Endothelial cell of umbilical vein (primary cell): ENCODE measurements at regions of chr12 and their contacts with region 1.

Region 1: GRCh38 chr12:99598785-99599184 is 48.8 kb upstream of the GARIN6 start:
- DNase-seq: no peak
- H3K4me3 ChIP-seq: no peak overlapping the region
- H3K27ac ChIP-seq: no peak overlapping the region
- H3K4me1 ChIP-seq: no peaks in the 10 kb centered on the region
- H3K27me3 ChIP-seq: no peaks in the 10 kb centered on the region
- CTCF ChIP-seq: no peak
- POLR2A ChIP-seq: no peak

Region 2: DNA sequence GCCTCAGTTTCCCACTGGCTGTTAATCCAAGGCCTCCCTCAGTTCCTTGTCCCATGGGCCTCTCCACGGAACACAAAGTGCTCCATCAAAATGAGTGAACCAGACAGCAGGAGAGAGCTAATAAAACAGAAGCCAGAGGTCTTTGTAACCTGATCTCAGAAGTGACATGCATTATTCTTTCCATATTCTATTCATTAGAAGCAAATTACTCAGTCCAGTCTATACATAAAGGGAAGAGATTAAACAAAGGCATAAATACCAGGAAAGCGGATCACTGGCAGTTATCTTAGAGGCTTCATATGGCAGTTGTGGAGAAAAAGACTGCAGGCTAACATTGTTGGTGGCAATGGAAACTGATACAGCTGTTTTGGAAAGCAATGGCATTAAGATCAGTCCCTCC is 121.8 kb before region 1 on chr12:
- CTCF ChIA-PET with region 1: no interaction called
- POLR2A ChIA-PET with region 1: no interaction called
- dilution Hi-C with region 1: no loop called
- intact Hi-C with region 1: loop called (anchors 10 kb)
- DNase-seq: no peak
- H3K4me3 ChIP-seq: no peak overlapping the region
- H3K27ac ChIP-seq: no peak overlapping the region
- H3K4me1 ChIP-seq: no peaks in the 10 kb centered on the region
- H3K27me3 ChIP-seq: no peaks in the 10 kb centered on the region
- CTCF ChIP-seq: no peak
- POLR2A ChIP-seq: no peak